OCI-LY7 (cell line): ENCODE measurements at regions of chr1 and their contacts with region 1.

Region 1: DNA sequence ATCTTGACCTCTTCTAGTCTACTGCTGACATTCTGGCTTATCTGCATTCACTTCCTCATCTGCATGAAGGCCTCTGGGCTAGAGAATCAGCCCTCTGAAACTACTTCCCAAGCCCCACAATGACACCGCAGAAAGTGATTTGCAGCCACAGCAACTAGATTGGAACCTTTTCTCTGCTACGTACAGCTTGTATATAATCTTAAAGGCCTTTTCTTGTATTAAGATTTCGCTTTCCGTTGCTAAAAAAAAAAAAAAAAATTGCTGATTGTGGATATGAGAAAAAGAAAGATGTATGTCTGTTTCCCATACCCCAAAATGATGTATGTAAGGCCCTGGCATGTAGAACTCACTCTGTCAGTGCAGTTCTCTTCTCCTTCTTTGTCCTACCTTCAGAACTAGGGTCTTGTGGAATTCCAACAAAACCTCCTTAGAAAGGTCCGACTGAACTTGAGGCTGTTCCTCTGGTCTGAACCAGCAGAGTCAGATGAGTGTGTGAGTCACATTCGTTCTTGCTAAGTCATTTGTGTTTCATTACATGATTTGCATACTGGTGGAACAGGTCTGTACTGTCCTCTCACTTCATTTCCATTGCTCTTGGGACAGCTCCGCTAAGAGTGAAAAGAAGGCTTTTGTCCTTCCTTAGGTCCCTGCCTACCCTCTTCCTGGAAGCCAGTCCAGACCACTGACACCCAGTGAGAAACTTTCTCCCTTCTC is 62.7 kb downstream of the PLPP3 start:
- DNase-seq: peak; percentile 38
- H3K4me3 ChIP-seq: no peak overlapping the region
- H3K27ac ChIP-seq: no peak overlapping the region
- H3K4me1 ChIP-seq: peaks cover 26% of the 10 kb centered on the region
- CTCF ChIP-seq: no peak

Region 2: DNA sequence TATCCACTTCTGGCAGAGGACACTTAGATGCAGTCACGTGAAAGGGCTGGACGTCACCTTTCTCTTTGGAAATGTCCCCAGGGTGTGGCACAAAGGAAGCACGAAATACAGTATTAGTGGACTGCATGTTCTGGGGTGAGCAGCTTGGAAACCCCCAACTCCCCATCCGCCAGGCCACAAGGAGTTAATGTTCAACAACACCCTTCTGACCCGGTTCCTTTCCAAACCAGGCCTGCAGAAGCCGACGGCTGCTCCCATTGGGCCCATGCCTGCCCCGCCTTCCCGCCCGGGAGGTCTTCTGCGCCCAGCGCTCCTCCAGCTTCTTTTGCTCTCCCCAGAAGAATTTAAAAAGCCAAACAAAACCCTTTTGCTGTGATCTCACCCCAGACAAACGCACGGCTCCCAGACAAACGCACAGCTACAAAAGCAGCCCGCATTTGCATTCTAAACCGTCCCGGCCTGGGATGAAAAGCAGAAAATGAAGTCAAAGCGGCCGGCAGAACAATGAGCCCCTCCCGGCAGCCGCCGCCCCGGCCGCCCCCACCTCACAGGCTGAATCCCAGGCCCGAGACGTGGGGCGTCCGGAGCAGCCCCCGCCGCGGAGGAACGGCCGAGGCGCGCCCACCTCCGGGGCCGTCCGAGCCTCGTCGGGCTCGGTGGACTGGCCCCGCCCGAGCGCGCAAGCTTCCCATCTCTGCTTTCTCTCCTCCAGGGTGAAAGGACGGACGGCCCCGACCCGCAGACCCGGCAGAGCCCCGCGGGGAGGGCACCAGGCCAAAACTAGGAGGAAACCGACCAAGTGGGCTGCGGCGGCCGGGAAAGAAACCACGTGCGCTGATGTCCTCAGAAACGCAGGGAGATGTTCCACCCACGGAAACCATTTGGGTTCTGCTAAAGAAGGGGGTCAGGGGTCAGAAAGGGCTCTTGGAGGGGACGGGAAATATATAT is 39.3 kb before region 1 on chr1:
- CTCF ChIA-PET with region 1: no interaction called
- POLR2A ChIA-PET with region 1: interaction called, 6 read pairs
- intact Hi-C with region 1: loop called (anchors 5 kb)
- DNase-seq: no peak
- H3K4me3 ChIP-seq: no peak overlapping the region
- H3K27ac ChIP-seq: no peak overlapping the region
- H3K4me1 ChIP-seq: peaks cover 9% of the 10 kb centered on the region
- CTCF ChIP-seq: no peak

Region 3: GRCh38 chr1:56644919-56645676 is 128.4 kb after region 1 on chr1 and contains the start of gene PRKAA2:
- CTCF ChIA-PET with region 1: no interaction called
- POLR2A ChIA-PET with region 1: no interaction called
- intact Hi-C with region 1: no loop called
- DNase-seq: no peak
- H3K4me3 ChIP-seq: no peak within 1 kb of the TSS
- H3K27ac ChIP-seq: no peak within 1 kb of the TSS
- H3K4me1 ChIP-seq: no peaks in the 10 kb centered on the region
- CTCF ChIP-seq: no peak
- total RNA-seq, gene PRKAA2: not detected in 2 replicates